A673 (cell line): ENCODE measurements at regions of chr1 and their contacts with region 1.

Region 1: DNA sequence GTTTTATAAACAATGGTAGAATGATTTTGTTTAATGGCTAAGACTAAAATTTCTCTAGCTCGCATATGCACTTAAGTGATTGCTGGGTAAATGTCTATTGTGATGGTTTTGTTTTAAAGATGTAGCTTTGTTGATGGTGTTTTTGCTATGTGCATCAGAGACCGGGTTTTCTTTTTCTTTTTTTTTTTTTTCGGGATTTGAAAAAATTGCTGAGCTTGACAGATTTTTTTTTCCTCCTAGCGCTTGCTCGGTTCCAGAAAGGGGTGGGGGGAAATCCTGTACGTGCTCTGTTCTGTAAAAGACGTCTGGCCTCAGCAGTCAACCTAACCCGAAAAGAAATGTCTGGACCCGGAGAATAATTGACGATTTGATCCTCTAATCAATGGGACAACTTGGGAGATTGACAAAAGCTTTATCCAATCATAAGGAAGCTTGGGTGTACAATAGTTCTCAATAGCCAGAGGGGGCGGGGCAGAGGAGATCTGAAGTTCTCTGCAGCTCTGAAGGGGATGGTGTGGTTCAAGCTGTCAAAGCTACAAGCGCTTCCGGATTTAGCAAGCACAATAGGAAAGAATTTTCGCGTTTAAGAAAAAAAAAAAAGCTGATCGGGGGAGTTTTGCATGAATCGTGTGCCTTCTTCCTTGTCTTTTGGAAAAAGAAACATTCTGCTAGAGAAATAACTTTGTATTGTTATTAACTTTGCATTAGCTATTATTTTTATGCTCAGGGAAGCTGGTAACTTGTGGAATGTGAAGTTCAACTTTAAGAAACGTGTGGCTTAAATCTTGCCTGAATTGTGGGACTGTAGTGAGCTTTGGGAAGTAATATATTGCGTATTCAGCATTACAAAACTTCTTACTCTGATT is 4.5 kb upstream of the NFIA start:
- DNase-seq: peak; percentile 100
- H3K4me3 ChIP-seq: peak overlapping the region; percentile 56
- H3K27ac ChIP-seq: peak overlapping the region; percentile 87
- H3K4me1 ChIP-seq: peaks cover 37% of the 10 kb centered on the region
- H3K27me3 ChIP-seq: no peaks in the 10 kb centered on the region
- CTCF ChIP-seq: no peak

Region 2: DNA sequence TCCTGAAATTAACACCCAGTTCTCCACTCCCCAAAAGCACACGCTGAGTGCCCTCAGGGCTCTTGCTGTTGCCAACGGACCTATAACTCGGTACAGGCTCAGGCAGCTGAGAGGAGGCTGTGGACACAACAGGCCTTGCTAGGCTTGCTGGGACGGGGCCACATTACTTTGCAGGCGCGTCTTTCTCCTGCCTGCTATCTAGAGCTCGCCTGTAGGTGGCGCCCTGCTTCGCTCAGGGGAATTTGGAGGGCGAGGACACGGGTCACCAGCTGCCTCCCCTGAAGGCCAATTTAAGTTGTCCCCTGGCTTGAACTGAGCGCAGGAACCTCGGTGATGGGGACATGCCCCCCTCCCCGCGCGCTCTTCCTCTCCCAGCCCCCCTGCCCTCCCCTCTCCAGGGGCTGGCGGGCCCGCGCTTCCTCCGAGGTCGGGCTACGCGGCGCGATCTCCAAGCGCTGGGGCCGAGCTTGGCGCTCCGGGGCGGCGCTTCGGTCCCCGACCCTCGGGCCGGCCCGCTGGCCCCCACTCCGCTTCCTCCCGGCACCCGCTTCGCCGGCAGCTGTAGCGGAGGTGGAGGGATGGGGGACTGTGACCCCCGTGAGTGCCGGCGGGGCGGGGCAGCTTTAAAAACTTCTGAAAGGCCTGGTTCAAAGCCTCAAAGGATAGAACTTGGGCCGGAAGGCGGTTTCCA is 27.9 kb before region 1 on chr1:
- CTCF ChIA-PET with region 1: interaction called, 14 read pairs
- POLR2A ChIA-PET with region 1: interaction called, 3 read pairs
- intact Hi-C with region 1: no loop called
- DNase-seq: peak; percentile 93
- H3K4me3 ChIP-seq: peak overlapping the region; percentile 82
- H3K27ac ChIP-seq: peak overlapping the region; percentile 86
- H3K4me1 ChIP-seq: peaks cover 8% of the 10 kb centered on the region
- H3K27me3 ChIP-seq: no peaks in the 10 kb centered on the region
- CTCF ChIP-seq: peak; percentile 97

Region 3: GRCh38 chr1:61097317-61097716 is 19.4 kb after region 1 on chr1:
- CTCF ChIA-PET with region 1: no interaction called
- POLR2A ChIA-PET with region 1: no interaction called
- intact Hi-C with region 1: no loop called
- DNase-seq: peak; percentile 69
- H3K4me3 ChIP-seq: no peak overlapping the region
- H3K27ac ChIP-seq: no peak overlapping the region
- H3K4me1 ChIP-seq: peaks cover 64% of the 10 kb centered on the region
- H3K27me3 ChIP-seq: no peaks in the 10 kb centered on the region
- CTCF ChIP-seq: no peak

Region 4: DNA sequence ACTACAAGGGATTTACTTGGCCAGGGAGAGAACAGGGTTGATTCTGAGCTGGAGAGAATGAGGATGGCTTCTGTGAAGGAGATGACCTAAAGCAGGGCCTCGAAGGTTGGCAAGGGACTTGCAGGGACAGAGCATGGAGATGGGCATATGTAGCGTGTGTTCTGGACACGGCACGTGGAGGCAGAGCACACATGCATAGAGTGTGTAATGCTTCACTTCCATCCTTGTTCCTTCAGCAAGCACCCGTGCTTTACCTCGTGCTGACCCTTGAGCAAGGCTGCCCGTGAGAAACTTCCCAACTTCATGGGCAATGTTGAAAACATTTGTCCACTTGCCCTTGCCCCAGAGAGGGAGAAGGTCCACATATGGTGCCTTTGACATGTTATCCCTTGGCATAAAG is 37.5 kb after region 1 on chr1:
- CTCF ChIA-PET with region 1: no interaction called
- POLR2A ChIA-PET with region 1: interaction called, 11 read pairs
- intact Hi-C with region 1: no loop called
- DNase-seq: no peak
- H3K4me3 ChIP-seq: no peak overlapping the region
- H3K27ac ChIP-seq: peak overlapping the region; percentile 27
- H3K4me1 ChIP-seq: peaks cover 78% of the 10 kb centered on the region
- H3K27me3 ChIP-seq: no peaks in the 10 kb centered on the region
- CTCF ChIP-seq: no peak

Region 5: GRCh38 chr1:61132176-61133001 is 54.5 kb after region 1 on chr1:
- CTCF ChIA-PET with region 1: interaction called, 3 read pairs
- POLR2A ChIA-PET with region 1: no interaction called
- intact Hi-C with region 1: loop called (anchors 5 kb)
- DNase-seq: peak; percentile 93
- H3K4me3 ChIP-seq: peak overlapping the region; percentile 28
- H3K27ac ChIP-seq: peak overlapping the region; percentile 78
- H3K4me1 ChIP-seq: peaks cover 71% of the 10 kb centered on the region
- H3K27me3 ChIP-seq: no peaks in the 10 kb centered on the region
- CTCF ChIP-seq: no peak

Region 6: DNA sequence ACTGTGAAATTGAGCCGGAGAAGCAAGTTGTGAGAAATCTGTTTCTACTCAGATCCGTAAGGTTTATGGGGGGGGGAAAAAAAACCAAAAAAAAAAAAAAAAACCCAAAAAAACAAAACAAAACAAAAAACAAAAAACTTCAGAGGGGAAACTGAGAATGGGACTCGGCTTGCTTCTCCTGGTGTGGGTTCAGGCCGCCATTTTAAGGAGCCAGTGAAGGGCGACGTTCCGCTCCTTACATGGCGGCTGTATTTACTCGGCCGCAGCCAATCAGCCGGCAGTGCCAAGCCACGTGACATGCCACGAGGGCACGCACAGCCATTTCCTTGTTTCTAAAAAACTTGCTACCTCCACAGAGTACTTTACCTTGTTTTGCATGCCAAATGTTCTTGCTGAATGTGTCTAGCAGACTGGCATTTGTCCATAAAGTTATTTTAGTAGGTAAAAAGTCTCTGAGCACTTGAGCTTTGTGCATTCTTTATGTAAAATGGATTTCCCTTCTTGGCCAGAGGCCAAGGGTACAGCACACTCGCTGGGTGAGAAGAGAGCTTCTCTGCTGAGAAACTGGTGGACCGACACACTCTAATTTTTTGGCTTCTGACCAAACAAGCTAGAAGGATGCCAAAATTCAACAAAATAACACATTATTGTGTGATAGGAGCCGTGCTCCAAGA is 106.3 kb after region 1 on chr1:
- CTCF ChIA-PET with region 1: no interaction called
- POLR2A ChIA-PET with region 1: no interaction called
- intact Hi-C with region 1: loop called (anchors 5 kb)
- DNase-seq: peak; percentile 95
- H3K4me3 ChIP-seq: peak overlapping the region; percentile 30
- H3K27ac ChIP-seq: peak overlapping the region; percentile 87
- H3K4me1 ChIP-seq: peaks cover 37% of the 10 kb centered on the region
- H3K27me3 ChIP-seq: no peaks in the 10 kb centered on the region
- CTCF ChIP-seq: no peak

Region 7: DNA sequence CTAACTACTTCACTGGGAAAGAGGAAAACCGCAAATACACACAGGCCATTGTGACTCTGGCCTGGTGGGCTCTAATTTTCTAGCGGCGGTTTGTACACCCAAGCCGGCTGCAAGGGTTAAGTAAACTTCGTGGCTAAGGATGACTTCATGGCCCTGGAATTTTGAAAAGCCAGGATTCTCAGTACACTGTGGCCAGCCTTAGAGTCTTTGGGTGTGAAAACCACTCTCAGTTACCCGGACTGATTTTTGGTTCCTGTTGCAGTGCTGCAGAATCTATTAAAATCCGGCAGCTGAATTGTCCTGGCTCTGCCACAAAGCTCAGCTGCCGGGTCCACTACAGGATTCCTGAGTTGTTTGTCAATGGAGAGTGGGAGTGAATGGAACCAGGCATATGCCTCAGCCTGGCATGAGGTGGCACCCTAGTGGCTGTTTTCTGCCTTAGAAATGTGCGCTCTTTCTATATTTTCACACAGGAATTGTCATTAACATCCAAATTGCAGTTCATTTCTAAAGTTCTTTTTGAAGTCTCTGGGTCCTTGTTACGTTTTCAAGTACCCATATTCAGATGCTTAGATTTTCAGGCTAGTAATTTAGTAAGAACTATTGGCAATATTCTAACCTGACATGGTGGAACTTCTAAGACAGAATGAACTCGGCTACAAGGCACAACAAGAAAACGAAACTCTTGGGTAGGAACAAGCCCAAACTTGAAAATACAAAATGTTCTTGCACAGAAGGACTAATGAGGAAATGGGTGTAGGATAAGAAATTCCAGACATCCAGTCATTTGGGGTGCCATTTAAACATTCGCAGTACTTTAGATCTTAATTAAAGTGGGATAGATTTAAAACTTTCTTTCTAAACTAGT is 260.3 kb after region 1 on chr1:
- CTCF ChIA-PET with region 1: interaction called, 11 read pairs
- POLR2A ChIA-PET with region 1: no interaction called
- intact Hi-C with region 1: loop called (anchors 2 kb)
- DNase-seq: peak; percentile 87
- H3K4me3 ChIP-seq: peak overlapping the region; percentile 33
- H3K27ac ChIP-seq: peak overlapping the region; percentile 69
- H3K4me1 ChIP-seq: peaks cover 39% of the 10 kb centered on the region
- H3K27me3 ChIP-seq: no peaks in the 10 kb centered on the region
- CTCF ChIP-seq: peak; percentile 86

Region 8: GRCh38 chr1:61453111-61453961 is 375.4 kb after region 1 on chr1:
- CTCF ChIA-PET with region 1: interaction called, 3 read pairs
- POLR2A ChIA-PET with region 1: no interaction called
- intact Hi-C with region 1: loop called (anchors 2 kb)
- DNase-seq: peak; percentile 92
- H3K4me3 ChIP-seq: no peak overlapping the region
- H3K27ac ChIP-seq: peak overlapping the region; percentile 62
- H3K4me1 ChIP-seq: peaks cover 37% of the 10 kb centered on the region
- H3K27me3 ChIP-seq: no peaks in the 10 kb centered on the region
- CTCF ChIP-seq: peak; percentile 90

Region 9: DNA sequence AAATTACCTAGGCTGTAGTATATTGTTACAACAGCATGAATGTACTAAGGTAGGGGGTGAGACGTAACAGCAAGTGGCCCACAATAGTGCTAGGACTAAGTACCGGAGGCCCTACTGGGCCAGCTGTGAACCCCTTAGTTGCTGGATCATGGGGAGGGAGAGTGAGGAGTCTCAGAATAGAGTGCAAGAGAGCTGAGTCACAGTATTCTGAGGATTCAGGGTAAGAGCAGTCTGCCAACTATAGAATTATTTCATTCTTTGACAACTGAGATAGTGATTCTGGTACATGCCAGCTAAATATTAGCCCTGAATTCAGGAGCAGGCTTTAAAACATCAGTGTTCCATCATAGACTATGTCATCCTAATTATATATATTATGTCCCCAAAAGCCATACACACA is 428.3 kb after region 1 on chr1:
- CTCF ChIA-PET with region 1: no interaction called
- POLR2A ChIA-PET with region 1: no interaction called
- intact Hi-C with region 1: no loop called
- DNase-seq: no peak
- H3K4me3 ChIP-seq: no peak overlapping the region
- H3K27ac ChIP-seq: no peak overlapping the region
- H3K4me1 ChIP-seq: peaks cover 3% of the 10 kb centered on the region
- H3K27me3 ChIP-seq: no peaks in the 10 kb centered on the region
- CTCF ChIP-seq: no peak